ENCODE measurements at regions of chr19 and their contacts with region 1.

Region 1: GRCh38 chr19:47428177-47428894 is 9.0 kb upstream of the MEIS3 start:
- ATAC-seq: peak; percentile 72 to 89 (median 84)
- H3K4me3 ChIP-seq: peak overlapping the region in 4 of 5 donors; percentile 2 to 24 (median 22)
- H3K27ac ChIP-seq: no peak overlapping the region
- H3K4me1 ChIP-seq: peaks cover 21 to 32% of the 10 kb centered on the region in 2 donors

Region 2: DNA sequence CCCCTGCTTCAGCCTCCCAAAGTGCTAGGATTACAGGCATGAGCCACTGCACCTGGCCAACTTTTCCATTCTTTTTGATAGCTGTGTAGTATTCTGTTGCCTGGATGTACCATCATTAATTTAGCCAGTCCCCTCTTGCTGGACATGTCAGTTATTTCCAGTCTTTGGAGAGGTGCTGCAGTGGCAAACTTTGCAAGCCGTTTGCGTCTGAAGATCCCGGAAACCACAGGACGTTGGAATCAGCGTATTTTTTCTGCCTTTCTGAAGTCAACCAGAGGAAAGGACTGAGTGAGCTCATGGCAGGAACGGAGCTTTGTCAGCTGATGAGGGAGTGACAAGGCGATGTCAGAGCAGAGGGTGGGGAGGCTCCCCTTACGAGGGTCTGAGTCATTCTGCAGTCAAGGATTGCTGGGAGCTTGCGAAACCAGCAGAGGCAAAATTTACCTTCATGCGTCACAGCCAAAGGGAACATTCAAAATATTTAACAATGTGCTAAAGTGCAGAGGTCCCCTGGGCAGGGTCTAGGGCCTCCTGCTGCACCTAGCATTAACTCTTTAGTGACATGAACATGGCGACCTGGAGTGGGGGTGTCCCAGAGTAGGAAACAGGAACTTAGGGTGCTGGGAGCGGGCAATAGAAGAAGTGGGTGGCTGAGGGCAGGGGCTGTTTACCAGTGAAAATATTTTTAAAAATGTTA is 113.1 kb before region 1 on chr19:
- in situ Hi-C with region 1: no loop called
- ATAC-seq: peak; percentile 91 to 100 (median 98)
- H3K4me3 ChIP-seq: no peak overlapping the region
- H3K27ac ChIP-seq: no peak overlapping the region
- H3K4me1 ChIP-seq: peaks cover 0 to 6% of the 10 kb centered on the region in 2 donors

Region 3: GRCh38 chr19:47483800-47484690 is 55.7 kb after region 1 on chr19 and contains the start of gene KPTN:
- in situ Hi-C with region 1: no loop called
- ATAC-seq: peak; percentile 76 to 93 (median 85)
- H3K4me3 ChIP-seq: peak within 1 kb of the TSS; percentile 64 to 87 (median 84)
- H3K27ac ChIP-seq: peak within 1 kb of the TSS; percentile 97
- H3K4me1 ChIP-seq: peaks cover 11 to 22% of the 10 kb centered on the region in 2 donors
- total RNA-seq, gene KPTN: 5.5 to 24.9 (median 9.6) TPM

Region 4: GRCh38 chr19:47707135-47707925 is 279.0 kb after region 1 on chr19:
- in situ Hi-C with region 1: loop called in 2 of 9 experiments (anchors 25 kb)
- ATAC-seq: peak; percentile 65 to 97 (median 77)
- H3K4me3 ChIP-seq: no peak overlapping the region
- H3K27ac ChIP-seq: no peak overlapping the region
- H3K4me1 ChIP-seq: no peaks in the 10 kb centered on the region

Region 5: GRCh38 chr19:47745010-47745901 is 316.9 kb after region 1 on chr19 and contains the start of gene NOP53:
- in situ Hi-C with region 1: loop called in 1 of 9 experiments (anchors 25 kb)
- ATAC-seq: peak; percentile 44 to 78 (median 67)
- H3K4me3 ChIP-seq: peak within 1 kb of the TSS; percentile 93 to 99 (median 97)
- H3K27ac ChIP-seq: peak within 1 kb of the TSS; percentile 99
- H3K4me1 ChIP-seq: peaks cover 9 to 25% of the 10 kb centered on the region in 2 donors
- total RNA-seq, gene NOP53: 106 to 243 (median 168) TPM

Measured in motor neuron (in vitro differentiated cells).